Activated CD4-positive, alpha-beta T cell treated with anti-CD3 and anti-CD28 coated beads for 36 hours (primary cell): ENCODE measurements at regions of chr12 and their contacts with region 1.

Region 1: GRCh38 chr12:15522565-15523187 is 200.4 kb downstream of the PTPRO start:
- DNase-seq: no peak
- ATAC-seq: no peak
- H3K4me3 Mint-ChIP-seq: no peak overlapping the region
- H3K27ac Mint-ChIP-seq: no peak overlapping the region
- H3K4me1 Mint-ChIP-seq: peaks cover 8% of the 10 kb centered on the region
- H3K27me3 Mint-ChIP-seq: peaks cover 20% of the 10 kb centered on the region

Region 2: DNA sequence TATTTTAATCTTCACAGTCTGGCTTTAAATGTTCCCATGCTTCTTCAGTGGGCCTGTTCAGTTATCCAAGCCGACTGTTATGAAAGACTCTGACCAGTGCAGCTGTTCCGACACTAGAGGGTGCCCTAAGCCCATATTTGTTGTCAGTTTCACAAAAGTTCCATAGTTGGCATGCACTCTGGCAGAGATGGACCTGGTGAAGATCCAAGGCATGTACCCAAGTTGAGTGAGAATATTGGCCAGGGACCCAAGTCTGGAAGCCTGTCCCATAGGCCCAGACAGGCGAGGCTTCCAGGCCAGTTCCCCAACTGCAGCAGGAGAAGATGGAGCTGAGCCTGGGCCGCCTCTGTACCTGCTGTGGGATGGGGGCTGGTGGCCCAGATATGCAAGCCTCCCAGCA is 798.9 kb before region 1 on chr12:
- CTCF ChIA-PET with region 1: interaction called, 3 read pairs
- POLR2A ChIA-PET with region 1: no interaction called
- intact Hi-C with region 1: loop called in 1 of 2 experiments (anchors 10 kb)
- DNase-seq: peak; percentile 72
- ATAC-seq: peak; percentile 80
- H3K4me3 Mint-ChIP-seq: no peak overlapping the region
- H3K27ac Mint-ChIP-seq: no peak overlapping the region
- H3K4me1 Mint-ChIP-seq: no peaks in the 10 kb centered on the region
- H3K27me3 Mint-ChIP-seq: peaks cover 5% of the 10 kb centered on the region

Region 3: DNA sequence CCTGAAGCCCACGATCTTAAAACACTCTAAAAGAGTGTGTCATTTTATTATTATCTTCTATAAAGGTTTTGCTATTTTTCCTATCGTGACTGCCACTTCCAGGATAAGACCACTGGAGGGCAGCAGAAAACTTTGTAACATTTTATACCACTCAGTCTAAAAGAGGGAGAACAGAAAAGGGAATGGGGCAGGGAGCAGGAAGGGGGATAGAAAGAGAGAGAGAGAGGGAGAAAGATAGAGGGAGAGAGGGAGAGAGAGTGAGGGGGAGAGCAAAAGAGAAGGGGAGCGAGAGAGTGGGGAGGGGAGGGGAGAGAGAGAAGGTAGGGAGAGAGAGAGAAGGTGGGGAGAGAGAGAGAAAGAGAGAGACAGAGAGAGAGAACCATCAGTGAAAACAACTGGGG is 677.3 kb before region 1 on chr12:
- CTCF ChIA-PET with region 1: no interaction called
- POLR2A ChIA-PET with region 1: no interaction called
- intact Hi-C with region 1: loop called in 1 of 2 experiments (anchors 10 kb)
- DNase-seq: peak; percentile 46
- ATAC-seq: peak; percentile 58
- H3K4me3 Mint-ChIP-seq: no peak overlapping the region
- H3K27ac Mint-ChIP-seq: no peak overlapping the region
- H3K4me1 Mint-ChIP-seq: peaks cover 11% of the 10 kb centered on the region
- H3K27me3 Mint-ChIP-seq: no peaks in the 10 kb centered on the region

Region 4: GRCh38 chr12:15151161-15152120 is 371.2 kb before region 1 on chr12:
- CTCF ChIA-PET with region 1: interaction called, 3 read pairs
- POLR2A ChIA-PET with region 1: no interaction called
- intact Hi-C with region 1: loop called in 1 of 2 experiments (anchors 2 kb)
- DNase-seq: no peak
- ATAC-seq: no peak
- H3K4me3 Mint-ChIP-seq: no peak overlapping the region
- H3K27ac Mint-ChIP-seq: no peak overlapping the region
- H3K4me1 Mint-ChIP-seq: no peaks in the 10 kb centered on the region
- H3K27me3 Mint-ChIP-seq: peaks cover 2% of the 10 kb centered on the region

Region 5: DNA sequence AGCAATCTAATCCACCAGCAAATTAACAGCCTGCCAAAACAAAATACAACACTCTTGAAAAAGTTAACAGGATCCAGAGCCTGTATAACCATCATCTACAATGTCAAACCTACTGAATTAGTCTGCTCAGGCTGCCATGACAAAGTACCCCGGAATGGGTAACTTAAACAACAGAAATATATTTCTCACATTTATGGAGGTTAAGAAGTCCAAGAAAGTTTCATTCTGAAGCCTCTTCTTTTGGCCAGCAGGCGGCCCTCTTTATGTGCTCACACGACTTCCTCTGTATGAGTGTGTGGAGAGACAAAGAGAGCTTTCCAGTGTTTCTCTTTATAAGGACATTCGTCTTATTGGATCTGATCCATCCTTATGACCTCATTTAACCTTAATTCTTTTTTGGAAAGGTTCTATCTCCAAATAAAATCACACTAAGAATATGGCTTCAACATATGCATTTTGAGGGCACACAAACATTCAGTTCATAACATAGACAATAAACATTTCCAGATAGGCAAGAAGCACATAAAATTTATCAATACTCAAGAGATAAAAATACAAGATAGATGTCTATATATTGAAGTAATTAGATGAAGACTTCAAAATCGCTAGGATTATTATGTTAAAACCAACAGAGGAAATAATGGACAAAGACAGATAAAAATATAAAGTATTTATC is 295.5 kb before region 1 on chr12:
- CTCF ChIA-PET with region 1: interaction called, 3 read pairs
- POLR2A ChIA-PET with region 1: no interaction called
- intact Hi-C with region 1: loop called in 1 of 2 experiments (anchors 2 kb)
- DNase-seq: peak; percentile 46
- ATAC-seq: peak; percentile 33
- H3K4me3 Mint-ChIP-seq: no peak overlapping the region
- H3K27ac Mint-ChIP-seq: no peak overlapping the region
- H3K4me1 Mint-ChIP-seq: no peaks in the 10 kb centered on the region
- H3K27me3 Mint-ChIP-seq: peaks cover 36% of the 10 kb centered on the region

Region 6: DNA sequence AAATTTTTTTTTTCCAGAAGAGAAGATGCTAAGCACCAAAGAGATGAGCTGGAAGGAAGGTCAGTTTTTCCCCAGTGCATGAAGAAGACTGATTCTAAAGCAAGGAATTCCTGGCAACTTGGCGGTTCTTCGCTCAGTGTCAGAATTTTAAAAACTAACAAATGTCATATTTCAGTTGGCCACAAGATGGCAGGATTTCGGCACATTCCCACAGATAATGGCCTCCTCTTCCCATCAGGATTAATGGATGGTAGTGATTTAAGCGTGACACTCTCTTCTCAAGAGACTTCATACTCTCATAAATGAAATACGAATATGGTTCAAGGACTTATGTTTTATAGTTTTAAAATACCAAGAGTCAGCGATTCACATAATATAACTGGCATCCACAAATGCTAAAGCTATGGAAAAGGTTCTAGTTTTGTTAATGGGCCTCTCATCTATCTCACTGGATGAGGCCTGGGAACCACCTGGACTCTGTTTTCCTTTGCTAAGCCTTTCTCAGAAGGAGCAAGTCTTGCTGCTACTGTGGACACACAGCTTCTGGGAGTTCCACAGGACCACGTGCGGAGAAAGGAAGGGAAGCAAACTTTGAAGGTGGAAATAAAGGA is 246.5 kb before region 1 on chr12:
- CTCF ChIA-PET with region 1: interaction called, 11 read pairs
- POLR2A ChIA-PET with region 1: no interaction called
- intact Hi-C with region 1: loop called (anchors 1 kb)
- DNase-seq: no peak
- ATAC-seq: no peak
- H3K4me3 Mint-ChIP-seq: no peak overlapping the region
- H3K27ac Mint-ChIP-seq: no peak overlapping the region
- H3K4me1 Mint-ChIP-seq: peaks cover 7% of the 10 kb centered on the region
- H3K27me3 Mint-ChIP-seq: peaks cover 4% of the 10 kb centered on the region

Region 7: GRCh38 chr12:15505616-15506015 is 17.1 kb before region 1 on chr12:
- CTCF ChIA-PET with region 1: no interaction called
- POLR2A ChIA-PET with region 1: no interaction called
- intact Hi-C with region 1: no loop called
- DNase-seq: no peak
- ATAC-seq: no peak
- H3K4me3 Mint-ChIP-seq: no peak overlapping the region
- H3K27ac Mint-ChIP-seq: no peak overlapping the region
- H3K4me1 Mint-ChIP-seq: no peaks in the 10 kb centered on the region
- H3K27me3 Mint-ChIP-seq: peaks cover 9% of the 10 kb centered on the region